Activated T-helper 1 cell treated with anti-CD3 and anti-CD28 coated beads, Interleukin-12 subunit alpha, Interleukin-12 subunit beta, Interleukin-2, Interleukin-4 antibody, amounts not matched to agents 30 ng/mL and 10 ng/mL and 1 ng/mL, durations not matched to agents 14 hours and 24 hours and 36 hours (primary cell): ENCODE measurements at regions of chr1 and their contacts with region 1.

Region 1: DNA sequence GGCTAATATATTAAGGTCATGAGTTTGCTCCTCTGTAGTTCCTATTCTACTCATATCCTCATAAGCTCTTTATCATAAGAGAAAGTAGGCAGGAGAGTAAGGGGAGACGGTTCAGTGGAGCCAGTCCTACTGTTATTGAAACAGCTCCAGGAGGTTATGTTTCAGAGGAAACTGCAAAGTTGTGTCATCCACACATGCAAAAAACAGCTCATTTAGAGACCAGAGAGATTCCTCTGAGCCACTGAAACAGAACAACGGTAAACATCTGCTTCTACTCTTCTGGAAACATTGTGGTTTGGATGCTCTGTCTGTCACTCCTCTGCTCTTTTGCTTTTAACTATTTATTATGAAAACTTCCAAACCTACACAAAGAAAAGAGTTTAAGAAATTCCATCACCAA is 66.3 kb upstream of the PPP2R5A start:
- DNase-seq: peak; percentile 18
- H3K4me3 Mint-ChIP-seq: peak overlapping the region; percentile 35
- H3K27ac Mint-ChIP-seq: peak overlapping the region; percentile 81
- H3K4me1 Mint-ChIP-seq: peaks cover 31% of the 10 kb centered on the region
- H3K27me3 Mint-ChIP-seq: peaks cover 3% of the 10 kb centered on the region

Region 2: DNA sequence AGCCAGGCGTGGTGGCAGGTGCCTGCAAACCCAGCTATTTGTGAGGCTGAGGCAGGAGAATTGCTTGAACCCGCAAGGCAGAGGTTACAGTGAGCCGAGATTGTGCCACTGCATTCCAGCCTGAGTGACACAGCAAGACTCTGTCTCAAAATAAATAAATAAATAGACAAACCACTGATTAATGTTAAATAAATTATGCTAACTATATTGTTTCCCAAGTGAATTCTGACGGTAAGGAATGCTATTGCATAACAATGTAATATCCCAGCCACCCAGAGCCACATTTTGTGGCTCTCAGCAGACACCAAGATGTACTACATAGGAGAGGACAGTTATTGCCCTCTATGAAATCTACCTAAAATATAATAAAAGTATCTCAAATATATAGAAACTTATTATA is 443.7 kb before region 1 on chr1:
- intact Hi-C with region 1: no loop called
- DNase-seq: no peak
- H3K4me3 Mint-ChIP-seq: no peak overlapping the region
- H3K27ac Mint-ChIP-seq: no peak overlapping the region
- H3K4me1 Mint-ChIP-seq: no peaks in the 10 kb centered on the region
- H3K27me3 Mint-ChIP-seq: no peaks in the 10 kb centered on the region

Region 3: GRCh38 chr1:212024469-212025149 is 194.3 kb before region 1 on chr1:
- intact Hi-C with region 1: loop called (anchors 5 kb)
- DNase-seq: no peak
- H3K4me3 Mint-ChIP-seq: no peak overlapping the region
- H3K27ac Mint-ChIP-seq: no peak overlapping the region
- H3K4me1 Mint-ChIP-seq: peaks cover 17% of the 10 kb centered on the region
- H3K27me3 Mint-ChIP-seq: no peaks in the 10 kb centered on the region

Region 4: DNA sequence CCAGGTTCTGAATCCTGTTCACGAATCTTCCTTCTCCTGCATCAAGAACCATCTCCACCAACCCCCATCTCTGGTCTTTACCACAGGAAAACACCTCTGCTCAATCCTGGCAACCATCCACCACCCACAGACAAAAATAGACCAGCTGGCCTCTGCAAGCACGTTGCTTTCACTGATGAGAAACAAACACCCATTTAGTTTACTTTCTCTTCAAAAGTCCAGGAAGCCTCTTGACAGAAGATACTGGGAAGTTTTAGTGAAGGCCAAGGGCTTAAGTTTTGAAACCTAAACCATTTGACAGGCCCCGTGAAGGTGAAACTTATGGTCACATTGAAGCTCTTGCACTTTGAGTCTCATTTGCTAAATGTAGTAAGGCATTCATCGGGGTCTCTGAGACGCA is 56.3 kb before region 1 on chr1:
- intact Hi-C with region 1: loop called (anchors 1 kb)
- DNase-seq: peak; percentile 20
- H3K4me3 Mint-ChIP-seq: peak overlapping the region; percentile 41
- H3K27ac Mint-ChIP-seq: peak overlapping the region; percentile 78
- H3K4me1 Mint-ChIP-seq: peaks cover 35% of the 10 kb centered on the region
- H3K27me3 Mint-ChIP-seq: no peaks in the 10 kb centered on the region

Region 5: GRCh38 chr1:212234431-212235395 is 15.8 kb after region 1 on chr1:
- intact Hi-C with region 1: loop called (anchors 1 kb)
- DNase-seq: no peak
- H3K4me3 Mint-ChIP-seq: peak overlapping the region; percentile 57
- H3K27ac Mint-ChIP-seq: peak overlapping the region; percentile 67
- H3K4me1 Mint-ChIP-seq: peaks cover 72% of the 10 kb centered on the region
- H3K27me3 Mint-ChIP-seq: no peaks in the 10 kb centered on the region

Region 6: DNA sequence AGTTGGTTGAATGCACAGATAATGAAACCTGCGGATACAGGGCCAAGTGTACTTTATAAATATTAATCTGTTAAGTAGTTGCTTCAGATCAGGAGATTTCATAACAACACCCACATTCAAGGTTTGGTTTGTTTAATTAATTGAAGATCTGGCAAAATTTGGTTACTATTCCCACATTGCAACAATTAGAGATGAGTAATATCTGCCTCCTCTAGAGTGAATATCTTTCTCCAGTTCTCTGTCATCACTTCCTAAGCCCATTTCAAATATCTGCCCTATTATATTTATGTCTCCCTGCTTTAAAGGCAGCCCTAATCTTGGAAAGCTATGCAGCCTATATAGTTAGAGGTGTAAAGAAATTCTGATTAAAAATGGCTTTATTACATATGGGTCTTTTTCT is 127.7 kb after region 1 on chr1:
- intact Hi-C with region 1: no loop called
- DNase-seq: no peak
- H3K4me3 Mint-ChIP-seq: no peak overlapping the region
- H3K27ac Mint-ChIP-seq: no peak overlapping the region
- H3K4me1 Mint-ChIP-seq: no peaks in the 10 kb centered on the region
- H3K27me3 Mint-ChIP-seq: no peaks in the 10 kb centered on the region

Region 7: GRCh38 chr1:212414328-212415106 is 195.6 kb after region 1 on chr1 and contains the start of gene PACC1:
- intact Hi-C with region 1: loop called (anchors 1 kb)
- DNase-seq: peak; percentile 88
- H3K4me3 Mint-ChIP-seq: peak within 1 kb of the TSS; percentile 100
- H3K27ac Mint-ChIP-seq: peak within 1 kb of the TSS; percentile 97
- H3K4me1 Mint-ChIP-seq: peaks cover 21% of the 10 kb centered on the region
- H3K27me3 Mint-ChIP-seq: peaks cover 6% of the 10 kb centered on the region
- total RNA-seq, gene PACC1: 17.6 and 19.8 TPM in 2 replicates